Aorta (tissue), 5 donors: ENCODE measurements at regions of chr19 and their contacts with region 1.

Region 1: DNA sequence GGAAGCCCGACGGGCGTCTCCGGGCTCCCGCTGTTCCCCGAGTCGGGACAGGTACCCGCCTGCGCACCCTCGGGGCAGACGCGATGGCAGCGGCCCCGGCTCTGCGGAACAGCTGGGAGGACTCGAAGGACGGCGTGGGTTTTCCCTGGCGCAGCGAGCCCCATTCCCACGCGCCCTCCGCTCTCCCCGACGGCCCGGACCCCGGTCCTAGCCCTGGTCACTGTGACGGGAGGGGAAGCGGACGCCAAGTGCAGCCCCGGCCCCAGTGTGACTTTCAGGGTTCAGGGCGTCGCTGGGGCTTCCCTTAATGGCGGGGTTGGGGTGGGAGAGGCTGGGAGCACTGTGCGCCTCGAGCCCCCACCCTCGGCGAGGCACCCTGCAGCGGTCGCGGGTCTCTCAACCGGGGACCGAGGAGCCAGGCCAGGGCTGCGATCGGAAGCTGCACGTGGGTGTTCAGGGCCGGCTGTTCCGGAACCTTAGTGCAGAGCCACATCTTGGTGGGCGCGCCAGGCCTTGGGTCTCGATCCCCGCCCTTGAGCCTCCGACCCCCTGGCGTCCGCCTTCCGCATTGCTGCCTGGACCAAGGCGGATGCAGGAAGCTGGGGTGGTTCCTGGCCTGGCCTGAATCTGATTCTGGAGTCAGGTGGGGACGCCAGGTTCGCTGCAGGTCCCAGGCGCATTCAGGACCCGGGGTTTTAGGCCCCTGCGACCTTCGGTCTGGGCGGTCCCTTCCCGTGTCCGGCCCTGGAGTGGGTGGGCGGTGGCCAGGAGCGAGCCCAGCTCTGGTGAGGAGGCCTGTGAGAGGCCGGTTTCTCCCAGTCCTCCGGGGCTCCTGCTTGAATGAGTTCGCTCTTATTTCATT is 3.5 kb downstream of the LGALS7B start:
- DNase-seq: peak; percentile 54 to 81
- ATAC-seq: peak; percentile 42
- H3K4me3 ChIP-seq: no peak overlapping the region
- H3K27ac ChIP-seq: no peak overlapping the region
- H3K4me1 ChIP-seq: no peaks in the 10 kb centered on the region
- H3K27me3 ChIP-seq: no peaks in the 10 kb centered on the region

Region 2: GRCh38 chr19:38718747-38719543 is 73.5 kb before region 1 on chr19:
- intact Hi-C with region 1: no loop called
- DNase-seq: peak; percentile 88 to 92
- ATAC-seq: peak; percentile 63
- H3K4me3 ChIP-seq: no peak overlapping the region
- H3K27ac ChIP-seq: peak overlapping the region in 1 of 2 donors; percentile 77
- H3K4me1 ChIP-seq: no peaks in the 10 kb centered on the region
- H3K27me3 ChIP-seq: no peaks in the 10 kb centered on the region

Region 3: DNA sequence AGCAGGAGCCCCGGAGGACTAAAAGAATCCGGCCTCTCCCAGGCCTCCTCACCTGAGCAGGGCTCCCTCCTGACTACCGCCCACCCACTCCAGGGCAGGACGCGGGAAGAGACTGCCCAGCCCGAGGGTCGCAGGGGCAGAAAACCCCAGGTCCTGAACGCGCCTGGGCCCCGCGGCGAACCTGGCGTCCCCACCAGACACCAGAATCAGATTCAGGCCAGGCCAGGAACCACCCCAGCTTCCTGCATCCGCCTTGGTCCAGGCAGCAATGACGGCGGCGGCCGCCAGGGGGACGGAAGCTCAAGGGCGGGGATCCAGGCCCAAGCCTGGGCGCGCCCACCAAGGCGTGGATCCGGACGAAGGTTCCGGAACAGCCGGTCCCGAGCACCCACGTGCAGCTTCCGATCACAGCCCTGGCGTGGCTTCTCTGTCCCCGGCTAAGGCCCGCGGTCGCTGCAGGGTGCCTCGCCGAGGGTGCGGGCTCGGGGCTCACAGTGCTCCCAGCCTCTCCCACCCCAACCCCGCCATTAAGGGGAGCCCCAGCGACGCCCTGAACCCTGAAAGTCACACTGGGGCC is 22.8 kb before region 1 on chr19:
- intact Hi-C with region 1: loop called in 1 of 2 experiments (anchors 2 kb)
- DNase-seq: peak; percentile 94 to 96
- ATAC-seq: peak; percentile 89
- H3K4me3 ChIP-seq: no peak overlapping the region
- H3K27ac ChIP-seq: no peak overlapping the region
- H3K4me1 ChIP-seq: no peaks in the 10 kb centered on the region
- H3K27me3 ChIP-seq: no peaks in the 10 kb centered on the region